BJ (cell line): ENCODE measurements at regions of chr11 and their contacts with region 1.

Region 1: GRCh38 chr11:67317205-67317887 is 14.0 kb downstream of the SSH3 start:
- DNase-seq: peak; percentile 55
- H3K4me3 ChIP-seq: peak overlapping the region; percentile 83
- H3K27me3 ChIP-seq: no peaks in the 10 kb centered on the region
- CTCF ChIP-seq: peak; percentile 93

Region 2: GRCh38 chr11:66344550-66345315 is 972.6 kb before region 1 on chr11 and contains the start of gene BRMS1:
- CTCF ChIA-PET with region 1: no interaction called
- POLR2A ChIA-PET with region 1: no interaction called
- DNase-seq: peak; percentile 80
- H3K4me3 ChIP-seq: peak within 1 kb of the TSS; percentile 98
- H3K27me3 ChIP-seq: no peaks in the 10 kb centered on the region
- CTCF ChIP-seq: peak; percentile 33; the same call in 1 of the 2 replicates
- polyA plus RNA-seq, gene BRMS1: 36.7 and 46.3 TPM in 2 replicates

Region 3: DNA sequence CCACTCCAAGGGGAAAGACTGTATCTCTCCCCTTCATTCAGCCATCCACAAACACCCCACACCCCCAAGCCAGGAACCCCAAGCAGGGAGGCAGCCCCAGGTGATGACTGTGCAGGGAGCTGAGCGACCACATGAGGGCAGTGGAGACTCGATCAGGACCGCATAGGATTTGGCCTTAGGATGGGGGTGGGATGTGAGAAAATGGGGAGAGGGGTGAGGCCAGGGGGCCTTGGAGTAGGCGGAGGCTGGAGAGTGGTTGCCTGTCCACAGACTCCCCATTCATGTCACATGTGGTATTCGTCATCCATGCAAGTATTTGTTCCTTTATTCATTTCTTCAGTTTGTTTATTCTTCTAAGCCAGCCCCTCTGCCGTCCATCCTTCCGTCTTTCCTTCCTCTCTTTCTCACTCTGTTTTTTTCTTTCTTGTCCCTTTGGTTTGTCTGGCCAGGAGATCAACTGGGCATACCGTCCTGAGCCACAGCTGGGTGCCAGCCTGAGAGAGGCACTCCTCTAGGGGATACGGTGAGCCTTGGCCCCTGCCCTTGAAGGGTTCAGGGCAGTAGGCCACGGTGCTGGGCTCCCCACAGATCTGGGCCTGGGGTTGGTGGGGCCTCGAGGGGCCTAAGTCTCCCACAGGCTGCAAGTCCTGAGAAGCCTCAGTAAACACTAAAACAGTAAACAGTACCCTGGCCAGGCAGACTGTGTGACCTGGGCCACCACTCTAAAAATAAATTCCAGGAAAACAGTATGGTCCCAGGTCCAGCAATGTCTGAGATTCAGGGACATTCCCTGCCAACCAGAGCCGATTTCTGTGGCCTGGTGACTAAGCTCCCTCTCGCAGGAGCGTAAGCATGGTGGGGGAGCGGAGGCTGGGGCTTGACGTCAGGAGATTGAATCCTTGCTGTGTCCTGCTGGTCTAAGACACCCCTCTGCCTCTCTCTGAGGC is 263.2 kb before region 1 on chr11:
- CTCF ChIA-PET with region 1: interaction called, 12 read pairs
- POLR2A ChIA-PET with region 1: no interaction called
- DNase-seq: no peak
- H3K4me3 ChIP-seq: no peak overlapping the region
- H3K27me3 ChIP-seq: peaks cover 2% of the 10 kb centered on the region; the same call in 1 of the 2 replicates
- CTCF ChIP-seq: peak; percentile 91

Region 4: DNA sequence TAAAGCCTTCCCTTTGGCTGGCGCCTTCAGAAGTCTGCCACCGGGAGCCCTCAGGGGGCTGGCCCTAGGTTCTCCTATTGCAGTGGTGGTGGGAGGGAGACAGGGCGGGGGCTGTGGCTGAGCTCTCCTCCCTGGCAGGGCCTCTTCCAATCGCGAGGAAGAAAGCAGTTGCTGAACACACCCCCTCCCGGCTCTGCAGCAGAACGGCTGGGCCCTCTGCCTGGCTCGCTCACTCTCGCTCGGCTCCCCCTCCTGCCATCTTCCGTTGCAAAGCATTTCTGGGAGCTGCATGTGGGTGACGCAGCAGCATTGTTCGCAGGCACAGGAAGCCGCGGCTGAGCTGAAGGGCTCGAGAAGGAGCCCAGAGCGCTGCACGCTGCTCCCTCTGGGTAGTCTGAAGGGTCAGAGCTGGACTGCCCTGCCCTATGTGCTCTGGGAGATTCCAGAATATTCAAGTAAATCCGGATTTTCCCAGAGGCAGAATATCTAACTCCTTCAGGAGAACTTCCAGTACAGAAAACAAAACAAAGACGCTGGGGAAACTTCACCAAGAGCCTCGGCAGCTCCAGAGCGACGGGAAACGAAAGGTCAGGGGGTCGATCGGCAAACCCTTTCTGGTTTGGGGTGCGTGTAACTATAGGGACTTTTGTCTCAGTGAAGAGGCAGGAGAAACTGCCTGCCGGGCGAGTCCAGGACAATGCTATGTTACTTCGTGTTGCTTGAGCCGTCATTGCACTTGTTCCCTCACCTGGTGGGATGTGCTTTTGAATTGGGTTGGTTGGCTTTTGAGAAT is 77.4 kb before region 1 on chr11:
- CTCF ChIA-PET with region 1: no interaction called
- POLR2A ChIA-PET with region 1: no interaction called
- DNase-seq: peak; percentile 96
- H3K4me3 ChIP-seq: peak overlapping the region; percentile 54
- H3K27me3 ChIP-seq: no peaks in the 10 kb centered on the region
- CTCF ChIP-seq: peak; percentile 36; the same call in 1 of the 2 replicates

Region 5: DNA sequence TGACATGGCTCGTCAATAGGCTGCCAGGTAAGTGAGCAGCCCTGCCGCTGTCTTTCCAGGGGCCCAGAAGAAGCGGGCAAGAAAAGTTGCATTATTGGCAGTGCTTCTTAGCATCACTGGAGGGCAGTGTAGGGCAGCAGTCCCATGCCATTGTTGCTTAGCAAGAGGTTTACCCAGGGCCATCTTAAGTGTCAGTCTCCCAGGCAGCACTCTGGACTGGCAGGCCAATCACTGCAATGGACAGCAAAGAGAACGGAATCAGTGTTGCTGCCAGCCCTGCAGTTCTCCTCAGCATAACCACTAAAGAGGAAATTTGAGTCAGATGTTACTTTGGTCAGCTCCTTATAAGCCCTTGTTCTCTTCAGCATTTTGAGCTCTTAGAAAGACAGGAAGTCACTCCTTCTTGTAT is 64.5 kb before region 1 on chr11:
- CTCF ChIA-PET with region 1: interaction called, 14 read pairs
- POLR2A ChIA-PET with region 1: no interaction called
- DNase-seq: no peak
- H3K4me3 ChIP-seq: no peak overlapping the region
- H3K27me3 ChIP-seq: no peaks in the 10 kb centered on the region
- CTCF ChIP-seq: peak; percentile 38; the same call in 1 of the 2 replicates

Region 6: GRCh38 chr11:67271541-67272284 is 45.6 kb before region 1 on chr11:
- CTCF ChIA-PET with region 1: interaction called, 31 read pairs
- POLR2A ChIA-PET with region 1: no interaction called
- DNase-seq: no peak
- H3K4me3 ChIP-seq: no peak overlapping the region
- H3K27me3 ChIP-seq: no peaks in the 10 kb centered on the region
- CTCF ChIP-seq: no peak

Region 7: DNA sequence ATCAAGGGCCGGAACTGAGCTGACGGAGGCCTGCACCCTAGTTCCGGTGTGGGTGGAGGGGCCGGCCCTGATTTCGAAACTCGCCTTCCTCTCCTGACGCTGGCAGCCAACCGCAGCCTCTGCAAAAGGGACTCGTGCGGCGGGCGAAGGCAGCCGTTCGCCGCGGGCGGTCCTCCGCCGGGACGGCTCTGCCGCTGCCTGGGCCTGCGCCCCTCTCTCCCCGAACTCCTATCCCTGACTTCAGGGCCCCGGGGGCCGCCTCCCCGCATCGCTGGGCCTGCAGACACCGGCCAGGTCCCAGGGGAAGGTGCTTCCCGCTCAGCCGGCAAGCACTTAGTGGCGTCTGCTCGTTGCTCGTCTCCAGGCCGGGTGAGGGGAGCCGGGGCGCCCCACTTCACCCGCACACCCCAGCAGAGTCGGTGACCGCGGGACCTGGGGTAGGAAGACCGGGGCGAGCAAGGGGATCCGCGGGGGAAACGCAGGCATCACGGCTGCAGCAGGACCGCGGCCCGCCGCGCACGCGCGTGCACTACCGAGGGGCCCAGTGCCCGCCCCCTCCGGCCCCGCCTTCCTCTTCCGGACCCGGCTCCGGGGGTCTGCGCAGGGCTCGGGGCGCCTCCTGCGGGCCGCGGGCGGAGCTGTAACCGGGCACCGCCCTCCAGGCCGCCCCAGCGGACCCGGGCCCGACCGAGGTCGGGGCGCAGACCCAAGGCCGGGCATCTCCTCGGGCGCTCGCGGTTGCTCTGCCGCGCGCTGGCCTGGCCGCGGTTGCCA is 28.7 kb before region 1 on chr11:
- CTCF ChIA-PET with region 1: interaction called, 14 read pairs
- POLR2A ChIA-PET with region 1: no interaction called
- DNase-seq: no peak
- H3K4me3 ChIP-seq: peak overlapping the region; percentile 94
- H3K27me3 ChIP-seq: no peaks in the 10 kb centered on the region
- CTCF ChIP-seq: no peak

Region 8: DNA sequence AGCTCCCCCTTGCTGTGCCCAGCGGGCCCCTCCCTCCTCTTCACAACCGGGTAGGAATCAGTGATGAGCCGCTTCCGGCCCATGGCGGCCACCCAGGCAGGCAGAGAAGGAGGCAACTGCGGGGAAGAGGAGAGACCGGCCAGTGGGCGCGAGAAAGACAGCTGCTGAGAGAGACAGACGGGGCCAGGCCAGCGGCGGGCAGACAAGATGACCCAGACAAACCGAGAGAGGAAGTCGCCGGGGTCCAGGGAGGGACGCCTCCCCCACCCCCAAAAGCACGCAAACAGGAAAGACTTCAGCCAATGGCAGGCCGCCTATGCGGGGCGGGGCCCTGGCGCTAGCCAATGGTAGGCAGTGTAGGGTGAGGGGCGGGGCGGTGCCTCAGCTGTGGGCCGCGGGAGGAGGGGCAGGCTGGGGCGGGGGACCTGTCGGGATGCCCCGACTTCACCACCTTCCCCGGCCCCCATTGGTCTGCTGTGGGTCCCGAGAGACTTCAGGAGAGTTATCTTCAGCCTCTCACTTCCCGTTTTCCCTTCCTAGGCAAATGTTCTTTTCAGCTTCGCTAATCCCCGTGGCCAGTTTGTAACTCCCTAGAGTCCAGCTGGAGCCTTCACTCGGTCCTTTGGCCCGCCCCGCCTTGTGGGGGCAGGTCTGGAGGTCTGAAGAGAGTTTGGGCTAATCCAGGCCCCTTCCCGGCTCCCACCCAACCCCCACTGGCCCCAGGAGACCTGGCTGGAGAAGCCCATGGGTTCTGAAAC is 36.1 kb after region 1 on chr11 and contains the start of gene POLD4:
- CTCF ChIA-PET with region 1: interaction called, 20 read pairs
- POLR2A ChIA-PET with region 1: interaction called, 3 read pairs
- DNase-seq: peak; percentile 74
- H3K4me3 ChIP-seq: peak within 1 kb of the TSS; percentile 78
- H3K27me3 ChIP-seq: no peaks in the 10 kb centered on the region
- CTCF ChIP-seq: no peak
- polyA plus RNA-seq, gene POLD4: 95.6 and 119 TPM in 2 replicates

Region 9: GRCh38 chr11:67401495-67402191 is 84.3 kb after region 1 on chr11 and contains the start of gene PPP1CA:
- CTCF ChIA-PET with region 1: no interaction called
- POLR2A ChIA-PET with region 1: no interaction called
- DNase-seq: peak; percentile 27
- H3K4me3 ChIP-seq: peak within 1 kb of the TSS; percentile 98
- H3K27me3 ChIP-seq: no peaks in the 10 kb centered on the region
- CTCF ChIP-seq: 0 out of 2 replicates have a peak, but pooled peaks have one; percentile 7
- polyA plus RNA-seq, gene PPP1CA: 146 and 233 TPM in 2 replicates